Transverse colon (tissue), 4 donors: ENCODE measurements at regions of chr9 and their contacts with region 1.

Region 1: DNA sequence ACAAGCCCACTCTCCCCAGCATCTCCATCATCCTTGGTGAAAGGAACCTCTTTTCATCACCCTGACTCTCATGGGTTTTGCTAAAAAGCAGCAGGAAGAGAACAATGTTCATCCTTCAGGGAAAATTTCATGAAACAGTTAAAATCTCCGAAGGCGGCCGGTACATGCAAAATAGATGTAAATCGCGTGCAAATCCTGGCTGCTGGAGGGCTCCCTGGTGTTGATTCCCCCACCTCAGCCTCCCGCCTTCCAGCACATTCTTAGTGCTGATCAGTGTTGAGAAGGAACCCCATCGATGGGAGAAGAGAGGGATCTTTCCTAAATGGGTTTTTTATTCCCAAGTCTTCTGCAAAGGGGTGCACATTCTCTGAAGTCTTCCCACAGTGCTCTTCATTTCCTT is 8.7 kb upstream of the GFI1B start:
- DNase-seq: no peak
- H3K4me3 ChIP-seq: no peak overlapping the region
- H3K27ac ChIP-seq: no peak overlapping the region
- H3K4me1 ChIP-seq: peaks cover 0 to 12% (median 7%) of the 10 kb centered on the region in 4 donors
- H3K27me3 ChIP-seq: peaks cover 16% of the 10 kb centered on the region
- CTCF ChIP-seq: no peak
- EP300 ChIP-seq: no peak
- POLR2A ChIP-seq: no peak

Region 2: DNA sequence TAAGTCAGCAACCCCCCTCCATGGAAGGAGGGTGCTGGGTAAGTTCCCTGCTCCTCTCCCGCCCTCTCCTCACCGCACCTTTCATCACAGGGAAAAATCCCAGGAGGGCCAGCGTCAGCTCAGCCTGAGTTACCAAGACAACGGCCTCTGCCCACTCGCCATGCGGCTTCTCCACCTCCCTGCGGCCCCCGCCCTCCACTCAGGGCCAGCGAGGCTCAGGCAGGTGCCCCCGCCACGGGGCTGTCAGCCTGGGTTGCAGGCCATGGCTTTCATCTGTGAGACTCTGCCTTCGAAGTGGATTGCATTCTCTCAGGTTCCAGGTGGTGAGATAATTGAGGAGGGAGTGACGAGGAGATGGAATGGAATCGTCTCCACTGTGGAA is 1988.0 kb before region 1 on chr9:
- in situ Hi-C with region 1: no loop called
- intact Hi-C with region 1: loop called (anchors 5 kb)
- DNase-seq: no peak
- H3K4me3 ChIP-seq: no peak overlapping the region
- H3K27ac ChIP-seq: no peak overlapping the region
- H3K4me1 ChIP-seq: no peaks in the 10 kb centered on the region
- H3K27me3 ChIP-seq: peaks cover 6% of the 10 kb centered on the region
- CTCF ChIP-seq: no peak
- EP300 ChIP-seq: no peak
- POLR2A ChIP-seq: no peak

Region 3: GRCh38 chr9:133478851-133479711 is 509.3 kb after region 1 on chr9 and contains the start of gene SLC2A6:
- in situ Hi-C with region 1: no loop called
- intact Hi-C with region 1: no loop called
- DNase-seq: peak; percentile 86
- H3K4me3 ChIP-seq: peak within 1 kb of the TSS; percentile 23 to 52 (median 40)
- H3K27ac ChIP-seq: peak within 1 kb of the TSS; percentile 53 to 74 (median 57)
- H3K4me1 ChIP-seq: peaks cover 7 to 20% (median 16%) of the 10 kb centered on the region in 4 donors
- H3K27me3 ChIP-seq: peaks cover 21% of the 10 kb centered on the region
- CTCF ChIP-seq: no peak
- EP300 ChIP-seq: no peak
- POLR2A ChIP-seq: peak; percentile 10
- total RNA-seq, gene SLC2A6: 0.96 to 20.1 (median 3.4) TPM